Cardiac septum (tissue), 1 donor: ENCODE measurements at regions of chr3 and their contacts with region 1.

Region 1: GRCh38 chr3:171703756-171704401 is 106.4 kb downstream of the PLD1 start:
- DNase-seq: no peak

Region 2: GRCh38 chr3:171600030-171600429 is 103.8 kb before region 1 on chr3:
- intact Hi-C with region 1: no loop called
- DNase-seq: no peak

Region 3: GRCh38 chr3:171772427-171773056 is 68.7 kb after region 1 on chr3:
- intact Hi-C with region 1: loop called (anchors 5 kb)
- DNase-seq: no peak